Activated B cell treated with CpG ODN at 0.5 μM for 24 hours (primary cell): ENCODE measurements at regions of chr10 and their contacts with region 1.

Region 1: DNA sequence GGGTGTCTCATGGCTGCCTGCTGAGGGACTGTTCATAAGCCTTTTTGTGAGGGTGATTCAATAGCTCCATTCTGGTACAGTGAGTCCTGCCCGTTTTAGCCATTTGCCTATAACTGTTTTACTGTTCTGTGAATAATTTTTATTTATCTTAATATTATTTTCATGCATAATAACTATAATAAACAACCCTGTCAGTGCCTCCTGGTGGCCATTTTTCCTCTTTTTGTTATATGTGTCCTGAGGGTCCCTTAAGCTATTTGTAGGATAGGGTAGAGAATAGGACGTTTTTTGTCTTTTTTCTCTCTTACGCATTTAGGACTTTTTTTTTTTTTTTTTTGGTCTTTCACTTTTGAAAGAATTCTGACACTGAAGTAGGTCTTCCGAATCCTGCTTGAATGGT is 2.9 kb downstream of the C1QL3 start:
- DNase-seq: no peak
- ATAC-seq: no peak
- H3K4me3 Mint-ChIP-seq: no peak overlapping the region
- H3K27ac Mint-ChIP-seq: no peak overlapping the region
- H3K4me1 Mint-ChIP-seq: peaks cover 14% of the 10 kb centered on the region
- H3K27me3 Mint-ChIP-seq: peaks cover 29% of the 10 kb centered on the region
- CTCF ChIP-seq: no peak

Region 2: DNA sequence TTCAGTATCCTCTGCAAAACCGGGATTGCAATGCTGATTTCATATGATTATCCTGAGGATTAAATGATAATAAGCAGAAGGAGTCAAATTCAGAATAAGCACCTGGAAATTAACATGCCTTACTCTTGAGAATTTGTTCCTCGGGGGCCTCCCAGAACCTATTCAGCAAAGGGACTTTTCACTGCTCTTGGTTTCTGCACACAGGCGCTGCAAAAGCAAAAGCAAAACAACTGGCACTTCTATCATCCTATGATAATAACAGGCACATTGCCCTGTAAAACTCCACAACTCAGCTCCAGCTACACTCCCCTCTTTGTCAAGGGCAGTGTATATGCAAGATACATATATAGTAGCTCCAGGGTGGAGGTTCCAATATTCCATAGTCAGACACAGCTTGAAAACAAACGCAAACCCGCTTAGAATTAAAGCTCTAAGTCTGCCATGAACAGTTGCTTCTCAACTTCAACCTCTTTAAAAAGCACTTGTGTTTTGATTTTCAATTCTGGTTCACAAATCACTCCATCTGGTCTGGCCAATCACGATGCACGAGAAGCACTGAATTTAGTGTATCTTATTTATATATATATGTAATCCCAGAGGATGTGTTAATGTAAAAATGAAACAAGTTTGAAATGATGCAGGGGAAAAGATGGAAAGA is 202.0 kb before region 1 on chr10:
- CTCF ChIA-PET with region 1: no interaction called
- POLR2A ChIA-PET with region 1: no interaction called
- intact Hi-C with region 1: no loop called
- DNase-seq: no peak
- ATAC-seq: no peak
- H3K4me3 Mint-ChIP-seq: no peak overlapping the region
- H3K27ac Mint-ChIP-seq: no peak overlapping the region
- H3K4me1 Mint-ChIP-seq: no peaks in the 10 kb centered on the region
- H3K27me3 Mint-ChIP-seq: no peaks in the 10 kb centered on the region
- CTCF ChIP-seq: no peak

Region 3: DNA sequence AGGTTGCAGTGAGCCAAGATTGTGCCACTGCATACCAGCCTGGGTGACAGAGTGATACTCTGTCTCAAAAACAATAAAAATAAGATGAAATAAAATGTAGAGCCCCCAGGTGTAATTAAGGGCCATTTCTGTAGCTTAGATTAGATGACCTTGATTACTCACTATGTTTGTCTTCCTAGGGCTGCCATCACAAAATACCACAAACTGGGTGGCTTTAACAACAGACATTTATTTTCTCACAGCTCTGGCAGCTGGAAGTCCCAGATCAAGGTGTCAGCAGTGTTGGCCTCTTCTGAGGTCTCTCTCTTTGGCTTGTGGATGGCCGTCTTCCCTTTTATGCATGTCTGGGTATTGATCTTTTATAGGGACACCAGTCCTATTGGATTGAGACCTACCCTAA is 75.9 kb before region 1 on chr10:
- CTCF ChIA-PET with region 1: no interaction called
- POLR2A ChIA-PET with region 1: interaction called, 10 read pairs
- intact Hi-C with region 1: no loop called
- DNase-seq: no peak
- ATAC-seq: no peak
- H3K4me3 Mint-ChIP-seq: no peak overlapping the region
- H3K27ac Mint-ChIP-seq: no peak overlapping the region
- H3K4me1 Mint-ChIP-seq: peaks cover 32% of the 10 kb centered on the region
- H3K27me3 Mint-ChIP-seq: no peaks in the 10 kb centered on the region
- CTCF ChIP-seq: no peak

Region 4: GRCh38 chr10:16646181-16647059 is 127.6 kb after region 1 on chr10:
- CTCF ChIA-PET with region 1: no interaction called
- POLR2A ChIA-PET with region 1: no interaction called
- intact Hi-C with region 1: no loop called
- DNase-seq: no peak
- ATAC-seq: no peak
- H3K4me3 Mint-ChIP-seq: no peak overlapping the region
- H3K27ac Mint-ChIP-seq: no peak overlapping the region
- H3K4me1 Mint-ChIP-seq: no peaks in the 10 kb centered on the region
- H3K27me3 Mint-ChIP-seq: no peaks in the 10 kb centered on the region
- CTCF ChIP-seq: no peak

Region 5: DNA sequence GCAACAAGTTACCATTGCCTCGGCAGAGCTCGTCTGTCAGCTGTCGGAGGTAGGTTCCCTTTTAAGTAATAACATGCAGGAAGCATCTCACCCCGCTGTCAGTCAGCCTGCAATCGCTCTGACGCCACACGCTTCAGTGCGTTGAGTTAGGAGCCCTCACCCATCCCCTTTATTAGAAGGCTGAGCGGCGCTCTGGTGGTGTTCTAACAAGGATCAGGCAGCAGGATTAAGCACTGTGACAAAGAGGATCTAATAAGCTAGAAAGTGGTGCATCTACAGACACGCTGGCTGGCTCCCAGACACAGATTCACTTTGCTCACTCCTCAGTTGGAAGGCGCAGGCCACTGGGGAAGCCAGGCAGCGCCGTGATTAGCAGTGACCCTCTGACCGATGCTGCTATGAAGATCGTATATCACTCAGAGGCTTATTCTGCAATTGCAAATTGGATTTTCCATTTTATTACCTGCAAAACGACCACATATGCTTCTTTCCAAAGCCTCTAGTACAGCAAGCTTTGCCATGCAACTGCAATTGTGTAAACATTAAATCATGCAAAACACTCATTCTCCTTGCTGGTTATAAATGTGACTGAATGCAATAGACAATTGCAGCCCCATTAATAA is 180.7 kb after region 1 on chr10:
- CTCF ChIA-PET with region 1: no interaction called
- POLR2A ChIA-PET with region 1: no interaction called
- intact Hi-C with region 1: no loop called
- DNase-seq: no peak
- ATAC-seq: no peak
- H3K4me3 Mint-ChIP-seq: no peak overlapping the region
- H3K27ac Mint-ChIP-seq: no peak overlapping the region
- H3K4me1 Mint-ChIP-seq: no peaks in the 10 kb centered on the region
- H3K27me3 Mint-ChIP-seq: no peaks in the 10 kb centered on the region
- CTCF ChIP-seq: no peak